ENCODE measurements at regions of chr17 and their contacts with region 1.

Region 1: DNA sequence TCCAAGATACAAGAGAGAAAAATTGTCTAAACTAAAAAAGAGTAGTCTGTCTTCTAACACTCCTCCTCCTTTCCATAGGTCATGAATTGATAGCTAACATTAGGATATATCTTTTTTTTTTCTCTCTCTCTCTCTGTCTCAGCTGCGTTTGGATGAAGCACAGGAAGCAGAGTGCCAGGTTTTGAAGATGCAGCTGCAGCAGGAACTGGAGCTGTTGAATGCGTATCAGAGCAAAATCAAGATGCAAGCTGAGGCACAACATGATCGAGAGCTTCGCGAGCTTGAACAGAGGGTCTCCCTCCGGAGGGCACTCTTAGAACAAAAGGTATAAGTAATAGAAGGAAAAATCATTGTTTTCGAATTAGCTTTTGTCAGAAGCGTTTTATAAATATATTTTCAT is 32.9 kb downstream of the ABHD15 start:
- DNase-seq: no peak
- H3K4me3 ChIP-seq: no peak overlapping the region
- H3K27ac ChIP-seq: no peak overlapping the region
- H3K4me1 ChIP-seq: no peaks in the 10 kb centered on the region
- H3K27me3 ChIP-seq: no peaks in the 10 kb centered on the region
- CTCF ChIP-seq: no peak
- POLR2A ChIP-seq: no peak

Region 2: DNA sequence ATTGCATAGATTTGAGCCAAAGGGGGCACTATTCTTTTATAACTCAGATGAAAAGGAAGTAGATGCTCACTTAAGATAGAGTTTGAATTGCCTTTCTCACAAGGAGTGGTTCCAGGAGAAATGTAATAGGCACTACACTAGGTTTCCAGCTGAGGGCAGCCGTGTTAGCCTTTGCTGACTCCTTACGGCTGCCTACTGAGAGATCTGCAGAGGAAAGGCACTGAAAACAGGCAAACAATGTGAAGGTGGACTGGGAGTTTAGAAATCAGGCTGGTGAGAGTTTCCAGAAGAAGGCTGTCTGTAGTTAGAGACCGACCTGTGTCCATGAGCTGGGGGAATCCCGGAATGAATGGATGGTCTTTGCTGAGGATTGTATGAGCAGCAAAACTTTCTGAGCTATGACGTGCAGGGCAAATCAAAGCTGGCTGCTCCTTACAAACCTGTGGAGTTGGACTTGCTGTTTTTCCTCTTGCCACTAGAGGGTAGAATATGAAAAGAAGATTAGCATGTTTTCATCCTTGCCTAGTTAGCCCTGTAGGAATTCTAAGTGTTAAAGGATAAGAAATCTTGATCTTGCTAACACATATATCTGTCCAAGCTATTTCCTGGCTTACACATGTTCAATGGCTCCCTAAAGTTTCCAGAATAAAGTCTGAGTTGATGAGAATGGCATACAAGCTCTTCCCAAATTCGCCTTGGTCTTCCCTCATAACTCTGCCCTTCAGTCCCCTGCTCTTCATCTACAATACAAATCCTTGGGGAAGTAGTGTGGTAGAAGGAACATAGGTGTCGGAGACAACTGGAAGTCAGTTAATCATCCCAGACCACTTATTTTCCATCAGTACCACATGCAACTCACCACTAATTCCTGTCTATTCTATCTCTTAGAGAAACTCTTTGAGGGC is 163.9 kb before region 1 on chr17:
- intact Hi-C with region 1: loop called (anchors 5 kb)
- DNase-seq: peak; percentile 84
- H3K4me3 ChIP-seq: no peak overlapping the region
- H3K27ac ChIP-seq: no peak overlapping the region
- H3K4me1 ChIP-seq: no peaks in the 10 kb centered on the region
- H3K27me3 ChIP-seq: no peaks in the 10 kb centered on the region
- CTCF ChIP-seq: peak; percentile 78 to 92 (median 85)
- POLR2A ChIP-seq: no peak

Region 3: DNA sequence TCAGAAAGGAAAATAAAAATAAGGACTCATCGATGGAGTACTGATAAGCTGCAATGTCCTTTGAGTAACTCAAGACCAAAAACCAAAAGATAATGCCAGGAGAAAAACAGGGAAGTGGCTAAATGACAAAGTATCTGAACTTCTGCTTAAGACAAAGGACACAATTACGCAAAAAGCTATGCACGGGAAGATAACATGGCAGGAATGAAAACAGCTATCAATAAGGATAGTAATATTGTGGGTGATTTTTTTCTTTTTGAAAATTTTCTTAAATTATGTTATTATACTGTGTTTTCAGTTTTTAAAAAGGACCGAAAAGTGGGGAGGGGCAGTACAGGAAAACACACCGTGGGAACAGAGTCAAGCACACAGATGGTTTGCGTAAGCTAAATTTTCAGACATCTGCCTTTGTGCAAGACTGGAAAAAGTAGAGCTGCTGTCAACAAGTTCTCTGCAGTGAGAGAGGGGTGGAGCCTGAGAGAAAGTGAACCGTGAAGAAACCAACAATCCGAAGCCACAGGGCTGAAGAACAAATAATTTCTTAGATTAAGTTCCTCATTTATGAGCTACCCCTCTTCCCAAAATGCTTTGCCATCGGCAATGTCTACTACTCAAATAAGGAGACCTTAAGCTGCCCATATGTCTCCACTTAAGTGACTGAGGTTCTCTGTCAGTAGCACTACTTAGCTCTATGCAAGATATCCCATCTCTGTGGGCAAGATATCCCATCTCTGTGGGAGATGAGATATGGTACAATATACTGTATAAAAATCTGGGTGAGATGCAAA is 188.6 kb after region 1 on chr17:
- intact Hi-C with region 1: no loop called
- DNase-seq: peak; percentile 52
- H3K4me3 ChIP-seq: no peak overlapping the region
- H3K27ac ChIP-seq: peak overlapping the region; percentile 43 to 73
- H3K4me1 ChIP-seq: no peaks in the 10 kb centered on the region
- H3K27me3 ChIP-seq: no peaks in the 10 kb centered on the region
- CTCF ChIP-seq: no peak
- POLR2A ChIP-seq: no peak